IMR-90 (cell line): ENCODE measurements at regions of chrX and their contacts with region 1.

Region 1: GRCh38 chrX:109732780-109733657 is at the start of gene ACSL4:
- DNase-seq: peak; percentile 75
- ATAC-seq: peak; percentile 94
- H3K4me3 ChIP-seq: peak within 1 kb of the TSS; percentile 83
- H3K27ac ChIP-seq: peak within 1 kb of the TSS; percentile 88
- H3K4me1 ChIP-seq: no peaks in the 10 kb centered on the region
- H3K27me3 ChIP-seq: no peaks in the 10 kb centered on the region
- CTCF ChIP-seq: no peak
- POLR2A ChIP-seq: peak; percentile 69
- RAD21 ChIP-seq: no peak
- total RNA-seq, gene ACSL4: 59.7 and 97.5 TPM in 2 replicates

Region 2: GRCh38 chrX:109830704-109831206 is 97.7 kb after region 1 on chrX:
- CTCF ChIA-PET with region 1: interaction called, 3 read pairs
- POLR2A ChIA-PET with region 1: interaction called, 4 read pairs
- dilution Hi-C with region 1: no loop called
- in situ Hi-C with region 1: no loop called
- intact Hi-C with region 1: loop called (anchors 1 kb)
- DNase-seq: peak; percentile 75
- ATAC-seq: peak; percentile 46
- H3K4me3 ChIP-seq: no peak overlapping the region
- H3K27ac ChIP-seq: peak overlapping the region; percentile 85
- H3K4me1 ChIP-seq: peaks cover 13% of the 10 kb centered on the region
- H3K27me3 ChIP-seq: peaks cover under 1% of the 10 kb centered on the region; the same call in 1 of the 2 replicates
- CTCF ChIP-seq: no peak
- POLR2A ChIP-seq: no peak
- RAD21 ChIP-seq: no peak

Region 3: DNA sequence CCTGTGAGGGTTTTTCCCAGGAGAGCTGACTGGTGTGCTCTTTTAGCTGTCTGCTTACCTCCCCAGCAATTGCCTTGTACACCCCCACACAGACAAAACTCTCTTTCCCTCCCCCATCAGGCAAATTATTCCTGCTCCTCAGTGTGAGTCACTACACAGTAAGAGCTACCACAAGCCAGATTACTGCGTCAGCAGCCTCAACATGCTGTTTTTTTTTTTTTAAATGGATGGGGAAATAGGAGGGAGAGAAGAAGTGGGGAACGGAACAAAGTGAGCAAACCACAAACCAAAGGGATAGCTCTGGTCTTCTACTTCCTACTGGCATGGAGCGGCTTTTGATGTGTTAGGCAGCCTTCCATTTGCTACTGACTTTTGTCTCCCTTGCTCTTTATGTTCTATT is 107.6 kb after region 1 on chrX:
- CTCF ChIA-PET with region 1: no interaction called
- POLR2A ChIA-PET with region 1: no interaction called
- dilution Hi-C with region 1: no loop called
- in situ Hi-C with region 1: loop called (anchors 5 kb)
- intact Hi-C with region 1: no loop called
- DNase-seq: peak; percentile 95
- ATAC-seq: peak; percentile 85
- H3K4me3 ChIP-seq: no peak overlapping the region
- H3K27ac ChIP-seq: peak overlapping the region; percentile 97
- H3K4me1 ChIP-seq: peaks cover 23% of the 10 kb centered on the region
- H3K27me3 ChIP-seq: peaks cover 2% of the 10 kb centered on the region
- CTCF ChIP-seq: no peak
- POLR2A ChIP-seq: no peak
- RAD21 ChIP-seq: no peak

Region 4: DNA sequence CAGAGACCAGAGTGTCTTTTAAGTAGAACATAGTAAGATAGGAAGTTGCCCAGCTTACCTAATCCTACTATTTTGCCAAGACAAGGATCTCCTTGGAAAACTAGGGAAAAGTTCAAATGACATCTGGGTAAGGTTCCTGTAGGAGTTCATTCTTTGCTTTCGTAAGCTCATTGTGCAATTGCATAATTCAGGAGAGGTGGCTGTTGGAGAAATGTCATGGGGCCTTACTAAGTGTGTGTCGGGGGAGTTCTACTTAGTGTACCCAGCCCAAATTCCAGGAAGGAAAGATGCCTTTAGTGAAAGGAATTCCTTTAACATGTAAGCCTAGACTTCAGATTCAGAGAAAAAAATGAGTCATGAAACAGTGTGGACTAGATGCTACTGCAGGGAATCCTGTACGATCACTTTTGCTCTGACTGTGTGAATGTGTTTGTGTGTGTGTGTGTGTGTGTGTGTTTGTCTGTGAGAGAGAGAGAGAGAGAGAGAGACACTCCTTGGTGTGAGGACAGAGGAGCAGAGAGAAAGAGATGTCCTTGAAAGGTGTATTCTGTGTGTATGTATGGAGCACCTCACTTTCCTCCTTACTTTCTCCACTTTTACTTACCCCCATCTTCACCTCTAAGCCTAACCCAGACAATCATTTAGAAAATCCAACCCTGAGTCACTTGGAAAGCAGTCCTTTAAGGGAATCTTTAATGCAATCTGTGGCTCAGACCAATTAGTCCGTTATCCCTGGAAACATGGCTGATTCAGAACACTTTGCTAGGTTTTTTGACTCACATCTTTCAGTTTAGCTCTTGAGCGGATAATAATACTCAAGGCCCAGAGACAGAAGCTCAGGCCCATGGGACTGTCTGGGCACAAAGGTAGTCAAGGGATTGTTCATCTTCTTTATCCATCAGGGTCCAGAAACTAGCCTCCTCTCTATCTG is 114.5 kb after region 1 on chrX:
- CTCF ChIA-PET with region 1: no interaction called
- POLR2A ChIA-PET with region 1: no interaction called
- dilution Hi-C with region 1: no loop called
- in situ Hi-C with region 1: loop called (anchors 5 kb)
- intact Hi-C with region 1: loop called (anchors 1 kb)
- DNase-seq: peak; percentile 90
- ATAC-seq: peak; percentile 87
- H3K4me3 ChIP-seq: no peak overlapping the region
- H3K27ac ChIP-seq: peak overlapping the region; percentile 87
- H3K4me1 ChIP-seq: peaks cover 11% of the 10 kb centered on the region
- H3K27me3 ChIP-seq: no peaks in the 10 kb centered on the region
- CTCF ChIP-seq: no peak
- POLR2A ChIP-seq: no peak
- RAD21 ChIP-seq: no peak

Region 5: GRCh38 chrX:109856974-109857373 is 124.0 kb after region 1 on chrX:
- CTCF ChIA-PET with region 1: no interaction called
- POLR2A ChIA-PET with region 1: no interaction called
- dilution Hi-C with region 1: no loop called
- in situ Hi-C with region 1: no loop called
- intact Hi-C with region 1: loop called (anchors 1 kb)
- DNase-seq: peak; percentile 34
- ATAC-seq: no peak
- H3K4me3 ChIP-seq: no peak overlapping the region
- H3K27ac ChIP-seq: peak overlapping the region; percentile 70; the same call in 1 of the 2 replicates
- H3K4me1 ChIP-seq: no peaks in the 10 kb centered on the region
- H3K27me3 ChIP-seq: 0 out of 2 replicates have a peak, but pooled peaks cover 2% of the 10 kb centered on the region
- CTCF ChIP-seq: peak; percentile 68
- POLR2A ChIP-seq: no peak
- RAD21 ChIP-seq: peak; percentile 69

Region 6: GRCh38 chrX:109872021-109872732 is 139.2 kb after region 1 on chrX:
- CTCF ChIA-PET with region 1: no interaction called
- POLR2A ChIA-PET with region 1: no interaction called
- dilution Hi-C with region 1: no loop called
- in situ Hi-C with region 1: no loop called
- intact Hi-C with region 1: loop called (anchors 5 kb)
- DNase-seq: peak; percentile 83
- ATAC-seq: peak; percentile 74
- H3K4me3 ChIP-seq: no peak overlapping the region
- H3K27ac ChIP-seq: peak overlapping the region; percentile 7
- H3K4me1 ChIP-seq: peaks cover 3% of the 10 kb centered on the region; the same call in 1 of the 2 replicates
- H3K27me3 ChIP-seq: no peaks in the 10 kb centered on the region
- CTCF ChIP-seq: no peak
- POLR2A ChIP-seq: no peak
- RAD21 ChIP-seq: no peak

Region 7: GRCh38 chrX:109974906-109975655 is 242.1 kb after region 1 on chrX:
- CTCF ChIA-PET with region 1: no interaction called
- POLR2A ChIA-PET with region 1: no interaction called
- dilution Hi-C with region 1: no loop called
- in situ Hi-C with region 1: no loop called
- intact Hi-C with region 1: no loop called
- DNase-seq: no peak
- ATAC-seq: no peak; the same call in 1 of the 2 replicates
- H3K4me3 ChIP-seq: no peak overlapping the region
- H3K27ac ChIP-seq: no peak overlapping the region
- H3K4me1 ChIP-seq: no peaks in the 10 kb centered on the region
- H3K27me3 ChIP-seq: peaks cover 14% of the 10 kb centered on the region
- CTCF ChIP-seq: no peak
- POLR2A ChIP-seq: no peak
- RAD21 ChIP-seq: no peak